ENCODE measurements at regions of chr18 and their contacts with region 1.

Region 1: GRCh38 chr18:64202863-64203262 is 54.0 kb upstream of the LINC00305 start:
- DNase-seq: no peak
- H3K4me3 ChIP-seq: no peak overlapping the region
- H3K27ac ChIP-seq: no peak overlapping the region
- H3K4me1 ChIP-seq: no peaks in the 10 kb centered on the region
- H3K27me3 ChIP-seq: no peaks in the 10 kb centered on the region
- CTCF ChIP-seq: no peak
- EP300 ChIP-seq: no peak
- POLR2A ChIP-seq: no peak

Region 2: GRCh38 chr18:64179556-64180080 is 23.2 kb before region 1 on chr18:
- in situ Hi-C with region 1: no loop called
- intact Hi-C with region 1: loop called (anchors 1 kb)
- DNase-seq: no peak
- H3K4me3 ChIP-seq: no peak overlapping the region
- H3K27ac ChIP-seq: no peak overlapping the region
- H3K4me1 ChIP-seq: no peaks in the 10 kb centered on the region
- H3K27me3 ChIP-seq: no peaks in the 10 kb centered on the region
- CTCF ChIP-seq: no peak
- EP300 ChIP-seq: no peak
- POLR2A ChIP-seq: no peak

Measured in transverse colon (tissue), 4 donors.